K562 (cell line): ENCODE measurements at regions of chr1 and their contacts with region 1.

Region 1: DNA sequence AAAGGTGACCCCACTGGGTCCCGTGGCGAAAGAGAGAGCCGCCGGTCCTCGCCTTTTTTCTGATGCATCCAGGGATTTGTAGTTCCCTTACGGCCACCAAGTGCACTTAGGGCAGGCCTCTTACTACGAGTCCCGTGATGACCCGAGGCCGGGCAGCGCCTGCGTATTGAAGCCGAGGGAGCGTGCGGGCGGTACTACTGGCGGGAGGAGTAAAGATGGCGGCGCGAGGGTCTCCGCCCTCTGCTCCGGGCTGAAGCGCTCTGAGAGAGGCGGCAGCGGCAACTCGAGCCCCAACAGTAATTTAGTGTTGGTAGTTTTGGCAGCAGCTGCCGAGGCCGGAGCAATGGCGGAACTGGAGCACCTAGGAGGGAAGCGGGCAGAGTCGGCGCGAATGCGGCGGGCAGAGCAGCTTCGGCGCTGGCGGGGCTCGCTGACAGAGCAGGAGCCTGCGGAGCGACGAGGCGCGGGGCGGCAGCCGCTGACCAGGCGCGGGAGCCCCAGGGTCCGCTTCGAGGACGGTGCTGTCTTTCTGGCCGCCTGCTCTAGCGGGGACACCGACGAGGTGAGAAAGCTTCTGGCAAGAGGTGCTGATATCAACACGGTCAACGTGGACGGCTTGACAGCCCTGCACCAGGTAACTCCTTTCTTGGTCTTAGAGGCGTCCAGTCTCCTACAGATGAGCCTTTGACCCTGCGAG is at the start of gene PPP1R12B:
- DNase-seq: peak; percentile 90 to 99 (median 92)
- ATAC-seq: peak; percentile 99
- H3K4me3 ChIP-seq: peak within 1 kb of the TSS; percentile 77
- H3K27ac ChIP-seq: peak within 1 kb of the TSS; percentile 81
- H3K4me1 ChIP-seq: peaks cover 5 to 18% of the 10 kb centered on the region in 2 experiments
- H3K27me3 ChIP-seq: no peaks in the 10 kb centered on the region
- CTCF ChIP-seq: no peak
- EP300 ChIP-seq: no peak
- POLR2A ChIP-seq: peak; percentile 86
- RAD21 ChIP-seq: no peak
- polyA plus RNA-seq, gene PPP1R12B: 0.73 to 1.1 TPM

Region 2: GRCh38 chr1:202189001-202189790 is 159.5 kb before region 1 on chr1:
- CTCF ChIA-PET with region 1: no interaction called
- POLR2A ChIA-PET with region 1: no interaction called
- in situ Hi-C with region 1: no loop called
- intact Hi-C with region 1: no loop called
- DNase-seq: peak; percentile 75 to 89 (median 77)
- ATAC-seq: peak; percentile 83
- H3K4me3 ChIP-seq: no peak overlapping the region
- H3K27ac ChIP-seq: no peak overlapping the region
- H3K4me1 ChIP-seq: peaks cover 2 to 29% of the 10 kb centered on the region in 2 experiments; a peak in 4 of 5 replicates
- H3K27me3 ChIP-seq: peaks cover 8 to 13% of the 10 kb centered on the region in 2 experiments; a peak in 4 of 5 replicates
- CTCF ChIP-seq: peak; percentile 66 to 86 (median 76)
- EP300 ChIP-seq: no peak
- POLR2A ChIP-seq: no peak
- RAD21 ChIP-seq: peak; percentile 21 to 67; a peak in 2 of 4 replicates

Region 3: DNA sequence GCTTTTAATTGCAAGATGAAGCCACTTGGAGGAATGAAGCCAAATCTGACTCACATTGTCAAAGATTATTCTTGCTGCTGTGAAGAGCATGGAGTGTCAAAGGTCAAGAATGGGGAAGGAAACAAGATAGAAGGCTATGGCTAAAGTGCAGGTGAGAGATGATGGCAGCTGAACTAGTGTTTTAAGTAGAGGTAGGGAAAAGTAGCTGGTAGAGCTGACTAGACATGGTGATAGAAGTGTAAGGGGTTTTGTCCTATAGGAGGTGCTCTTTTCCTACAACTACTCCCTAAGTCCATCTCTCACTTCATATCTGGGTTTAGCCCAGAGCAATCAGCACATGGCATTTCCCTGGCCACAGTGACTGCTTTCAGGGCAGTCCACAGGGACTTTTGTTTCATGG is 18.8 kb before region 1 on chr1:
- CTCF ChIA-PET with region 1: no interaction called
- POLR2A ChIA-PET with region 1: interaction called, 16 read pairs
- in situ Hi-C with region 1: no loop called
- intact Hi-C with region 1: no loop called
- DNase-seq: peak in 2 of 4 experiments; percentile 32 to 41
- ATAC-seq: peak; percentile 83
- H3K4me3 ChIP-seq: no peak overlapping the region
- H3K27ac ChIP-seq: no peak overlapping the region
- H3K4me1 ChIP-seq: no peaks in the 10 kb centered on the region
- H3K27me3 ChIP-seq: no peaks in the 10 kb centered on the region
- CTCF ChIP-seq: peak; percentile 30 to 62 (median 54); a peak in 4 of 6 replicates
- EP300 ChIP-seq: no peak
- POLR2A ChIP-seq: peak; percentile 45; the same call in 1 of the 2 replicates
- RAD21 ChIP-seq: peak in 1 of 2 experiments; percentile 54; a peak in 2 of 4 replicates

Region 4: DNA sequence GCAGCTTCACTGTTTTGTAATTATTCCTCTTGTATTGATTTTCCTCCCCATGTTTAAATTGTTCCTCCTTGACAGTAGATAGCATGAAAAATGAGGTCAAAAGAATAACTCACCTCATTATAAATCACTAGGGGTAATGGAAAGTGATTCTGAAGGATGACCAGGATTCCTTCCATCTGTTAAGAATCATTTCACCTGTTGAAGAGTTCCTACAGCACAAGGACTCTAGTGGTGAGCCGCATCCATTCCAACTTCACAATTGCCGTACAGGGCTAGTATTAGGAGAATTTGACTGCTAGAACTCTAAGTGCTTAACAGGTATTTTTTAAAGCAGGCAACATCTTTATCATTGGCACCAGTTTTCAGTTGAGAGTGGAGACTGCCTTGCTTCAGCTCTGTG is 13.6 kb after region 1 on chr1:
- CTCF ChIA-PET with region 1: no interaction called
- POLR2A ChIA-PET with region 1: interaction called, 20 read pairs
- in situ Hi-C with region 1: no loop called
- intact Hi-C with region 1: no loop called
- DNase-seq: no peak
- ATAC-seq: no peak
- H3K4me3 ChIP-seq: no peak overlapping the region
- H3K27ac ChIP-seq: no peak overlapping the region
- H3K4me1 ChIP-seq: peaks cover 5 to 8% of the 10 kb centered on the region in 2 experiments; a peak in 2 of 5 replicates
- H3K27me3 ChIP-seq: no peaks in the 10 kb centered on the region
- CTCF ChIP-seq: no peak
- EP300 ChIP-seq: no peak
- POLR2A ChIP-seq: no peak
- RAD21 ChIP-seq: no peak

Region 5: DNA sequence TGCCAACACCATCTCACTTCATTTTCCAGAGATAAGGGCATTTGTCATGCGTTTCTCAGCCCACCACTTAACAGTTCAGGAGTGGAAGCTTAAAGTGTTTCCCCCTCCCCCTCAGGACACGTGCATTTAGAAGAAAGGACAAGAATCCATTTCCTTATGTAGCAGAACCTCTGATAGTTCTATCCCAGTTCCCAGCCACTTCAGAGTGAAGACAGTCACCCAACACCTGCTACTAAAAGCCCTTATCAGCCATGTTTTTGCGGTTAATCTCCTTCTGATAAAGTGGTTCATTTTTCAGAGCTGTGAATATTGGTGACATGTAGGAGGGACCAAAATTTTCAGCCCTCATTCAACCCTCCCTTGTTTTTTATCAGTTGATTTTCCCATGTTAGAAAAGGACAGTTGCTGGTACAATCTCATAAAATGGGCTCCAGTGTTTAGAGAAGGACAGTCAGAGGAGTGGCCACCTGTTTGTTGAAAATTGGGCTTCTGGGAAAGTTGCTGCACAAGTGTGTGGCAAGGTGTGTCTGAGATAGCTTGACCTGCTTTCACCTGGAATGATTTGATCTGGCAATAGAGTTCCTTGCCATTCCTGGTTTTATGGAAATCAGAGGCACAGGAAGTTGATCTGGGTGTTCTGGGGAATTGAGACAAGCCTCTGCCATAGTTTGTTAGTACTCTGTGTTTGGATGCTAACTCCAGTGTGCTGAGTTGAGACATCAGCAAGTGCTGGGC is 113.9 kb after region 1 on chr1:
- CTCF ChIA-PET with region 1: interaction called, 3 read pairs
- POLR2A ChIA-PET with region 1: interaction called, 3 read pairs
- in situ Hi-C with region 1: no loop called
- intact Hi-C with region 1: loop called (anchors 5 kb)
- DNase-seq: peak in 3 of 4 experiments; percentile 25 to 77 (median 47)
- ATAC-seq: peak; percentile 70
- H3K4me3 ChIP-seq: no peak overlapping the region
- H3K27ac ChIP-seq: peak overlapping the region; percentile 2; the same call in 1 of the 3 replicates
- H3K4me1 ChIP-seq: peaks cover 0 to 7% of the 10 kb centered on the region in 2 experiments; a peak in 2 of 5 replicates
- H3K27me3 ChIP-seq: no peaks in the 10 kb centered on the region
- CTCF ChIP-seq: no peak
- EP300 ChIP-seq: 0 out of 2 replicates have a peak, but pooled peaks have one; percentile 44
- POLR2A ChIP-seq: no peak
- RAD21 ChIP-seq: no peak; a peak in 1 of 4 replicates

Region 6: DNA sequence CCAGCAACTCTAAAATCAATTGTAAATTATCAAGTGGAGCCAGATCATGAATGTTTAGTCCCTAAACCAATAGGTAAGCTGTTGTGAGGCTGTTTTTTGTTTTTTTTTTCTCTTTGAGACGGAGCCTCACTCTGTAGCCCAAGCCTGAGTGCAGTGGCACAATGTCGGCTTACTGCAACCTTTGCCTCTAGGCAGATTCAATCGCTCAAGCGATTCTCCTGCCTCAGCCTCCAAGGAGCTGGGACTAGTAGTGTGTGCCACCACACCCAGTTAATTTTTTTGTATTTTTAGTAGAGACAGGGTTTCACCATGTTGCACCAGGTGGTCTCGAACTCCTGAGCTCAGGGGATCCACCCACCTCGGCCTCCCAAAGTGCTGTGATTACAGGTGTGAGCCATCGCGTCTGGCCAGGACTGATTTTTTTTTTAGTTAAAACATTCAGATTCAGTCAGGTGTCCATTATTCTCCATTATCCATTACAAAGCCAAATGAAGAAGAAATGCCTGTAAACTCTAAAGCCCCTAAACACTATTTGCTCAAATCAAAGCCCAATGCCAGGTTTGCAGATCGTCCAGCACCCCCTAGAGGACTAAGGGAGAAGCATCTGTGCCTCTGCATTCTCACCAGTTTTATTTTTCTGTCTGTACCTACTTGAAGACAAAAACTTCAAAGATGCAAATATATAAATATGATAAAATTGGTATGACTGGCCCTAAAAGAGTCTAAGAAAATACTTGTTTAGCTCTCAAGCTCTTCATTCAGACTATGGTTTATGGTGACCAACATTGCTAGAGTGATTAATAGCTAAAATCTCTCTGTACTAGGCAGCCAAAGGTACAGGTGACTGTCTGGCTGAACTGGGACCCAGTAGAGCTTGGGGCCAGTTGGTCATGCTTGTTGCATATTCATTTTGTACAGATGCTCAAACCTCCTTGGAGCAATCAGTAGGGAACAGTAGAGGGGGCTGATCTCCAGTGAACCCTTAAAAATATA is 223.0 kb after region 1 on chr1:
- CTCF ChIA-PET with region 1: interaction called, 15 read pairs
- POLR2A ChIA-PET with region 1: no interaction called
- in situ Hi-C with region 1: no loop called
- intact Hi-C with region 1: loop called (anchors 2 kb)
- DNase-seq: peak; percentile 63 to 72 (median 68)
- ATAC-seq: peak; percentile 91
- H3K4me3 ChIP-seq: no peak overlapping the region
- H3K27ac ChIP-seq: no peak overlapping the region
- H3K4me1 ChIP-seq: no peaks in the 10 kb centered on the region
- H3K27me3 ChIP-seq: no peaks in the 10 kb centered on the region
- CTCF ChIP-seq: peak; percentile 87 to 96 (median 90)
- EP300 ChIP-seq: no peak
- POLR2A ChIP-seq: no peak
- RAD21 ChIP-seq: peak; percentile 98

Region 7: GRCh38 chr1:202599677-202600431 is 251.2 kb after region 1 on chr1:
- CTCF ChIA-PET with region 1: interaction called, 4 read pairs
- POLR2A ChIA-PET with region 1: no interaction called
- in situ Hi-C with region 1: no loop called
- intact Hi-C with region 1: loop called (anchors 10 kb)
- DNase-seq: peak; percentile 74 to 79 (median 75)
- ATAC-seq: peak; percentile 96
- H3K4me3 ChIP-seq: no peak overlapping the region
- H3K27ac ChIP-seq: no peak overlapping the region
- H3K4me1 ChIP-seq: no peaks in the 10 kb centered on the region
- H3K27me3 ChIP-seq: peaks cover 2 to 35% of the 10 kb centered on the region in 2 experiments; a peak in 3 of 5 replicates
- CTCF ChIP-seq: peak; percentile 87 to 91 (median 88)
- EP300 ChIP-seq: no peak
- POLR2A ChIP-seq: no peak
- RAD21 ChIP-seq: peak; percentile 87 to 92

Region 8: GRCh38 chr1:202710070-202711045 is 361.7 kb after region 1 on chr1 and contains the start of gene SYT2:
- CTCF ChIA-PET with region 1: no interaction called
- POLR2A ChIA-PET with region 1: no interaction called
- in situ Hi-C with region 1: no loop called
- intact Hi-C with region 1: loop called (anchors 10 kb)
- DNase-seq: peak; percentile 32 to 81 (median 58)
- ATAC-seq: peak; percentile 74
- H3K4me3 ChIP-seq: no peak within 1 kb of the TSS
- H3K27ac ChIP-seq: no peak within 1 kb of the TSS
- H3K4me1 ChIP-seq: peaks cover 0 to 16% of the 10 kb centered on the region in 2 experiments; a peak in 2 of 5 replicates
- H3K27me3 ChIP-seq: peaks cover 68 to 84% of the 10 kb centered on the region in 2 experiments
- CTCF ChIP-seq: no peak
- EP300 ChIP-seq: no peak
- POLR2A ChIP-seq: no peak
- RAD21 ChIP-seq: no peak
- polyA plus RNA-seq, gene SYT2: not detected